Mammary epithelial cell (primary cell): ENCODE measurements at regions of chr9 and their contacts with region 1.

Region 1: DNA sequence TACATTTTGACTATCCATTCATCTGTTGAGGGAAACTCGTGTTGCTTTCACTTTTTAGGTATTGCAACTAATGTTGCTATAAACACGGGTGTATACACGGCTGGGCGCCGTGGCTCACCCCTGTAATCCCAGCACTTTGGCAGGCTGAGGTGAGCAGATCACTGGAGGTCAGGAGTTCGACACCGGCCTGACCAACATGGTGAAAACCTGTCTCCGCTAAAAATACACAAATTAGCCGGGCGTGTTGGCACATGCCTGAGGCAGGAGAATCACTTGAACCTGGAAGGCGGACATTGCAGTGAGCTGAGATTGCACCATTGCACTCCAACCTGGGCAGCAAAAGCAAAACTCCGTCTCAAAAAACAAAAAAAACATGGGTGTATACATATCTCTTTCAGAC is 673.1 kb downstream of the TLE4 start:
- DNase-seq: no peak
- H3K4me3 ChIP-seq: no peak overlapping the region
- H3K27ac ChIP-seq: no peak overlapping the region
- H3K4me1 ChIP-seq: no peaks in the 10 kb centered on the region
- H3K27me3 ChIP-seq: no peaks in the 10 kb centered on the region
- CTCF ChIP-seq: no peak

Region 2: GRCh38 chr9:80213613-80214012 is 31.2 kb before region 1 on chr9:
- CTCF ChIA-PET with region 1: no interaction called
- dilution Hi-C with region 1: loop called (anchors 5 kb)
- in situ Hi-C with region 1: no loop called
- intact Hi-C with region 1: no loop called
- DNase-seq: no peak
- H3K4me3 ChIP-seq: no peak overlapping the region
- H3K27ac ChIP-seq: no peak overlapping the region
- H3K4me1 ChIP-seq: no peaks in the 10 kb centered on the region
- H3K27me3 ChIP-seq: no peaks in the 10 kb centered on the region
- CTCF ChIP-seq: no peak